Left cardiac atrium (tissue), 4 donors: ENCODE measurements at regions of chr1 and their contacts with region 1.

Region 1: DNA sequence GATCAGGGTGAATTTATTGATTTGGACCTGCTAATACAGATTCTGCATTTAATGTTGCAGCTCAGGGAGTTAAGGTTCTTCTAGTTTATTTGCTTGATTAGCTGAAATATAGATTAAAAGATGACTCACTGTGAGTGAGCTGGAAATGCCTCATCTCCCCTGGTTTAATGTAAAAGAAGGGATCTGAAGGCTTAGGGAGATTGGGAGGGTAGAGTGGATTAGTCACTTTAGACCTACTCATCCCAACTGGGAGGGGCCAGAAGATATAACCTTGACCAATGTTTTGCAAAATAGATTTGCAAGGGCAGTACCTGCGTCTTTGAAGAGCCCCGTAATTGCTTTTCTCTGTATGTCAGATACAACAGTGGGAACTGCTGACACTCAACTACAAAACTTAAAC is 922.8 kb upstream of the ADGRL4 start:
- DNase-seq: no peak
- ATAC-seq: no peak

Region 2: DNA sequence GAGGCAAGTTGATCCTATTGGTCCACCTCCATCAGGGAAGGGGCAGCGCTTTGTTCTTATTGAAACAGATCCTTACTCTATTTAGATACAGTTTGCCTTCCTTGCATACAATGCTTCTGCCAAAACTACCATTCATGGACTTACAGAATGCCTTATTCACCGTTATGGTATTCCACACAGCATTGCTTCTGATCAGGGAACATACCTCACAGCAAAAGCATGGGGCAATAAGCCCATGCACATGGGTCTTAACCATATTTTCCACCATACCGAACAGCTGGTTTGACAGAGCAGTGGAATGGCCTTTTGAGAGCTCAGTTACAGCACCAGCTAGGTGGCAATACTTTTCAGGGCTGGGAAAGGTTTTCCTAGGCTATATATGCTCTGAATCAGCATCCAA is 378.0 kb before region 1 on chr1:
- intact Hi-C with region 1: no loop called
- DNase-seq: no peak
- ATAC-seq: no peak

Region 3: DNA sequence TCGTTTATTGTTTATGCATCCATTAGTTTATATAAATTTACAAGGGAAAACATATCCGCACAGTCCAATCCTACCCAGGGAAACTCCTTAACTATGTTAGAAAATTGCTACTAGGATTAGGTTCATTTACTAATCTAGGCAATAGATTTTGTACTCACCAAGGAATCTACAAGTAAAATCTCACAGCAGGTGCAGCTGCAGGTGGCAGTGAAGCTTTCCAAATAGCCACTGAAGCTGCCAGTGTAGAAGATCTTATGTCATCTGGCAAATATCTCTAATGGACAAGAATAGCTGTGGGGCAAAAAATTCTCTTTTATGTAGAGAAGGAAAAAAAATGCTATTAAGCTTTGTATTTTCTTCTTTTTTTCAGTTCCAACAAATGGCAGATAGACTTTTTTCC is 40.5 kb after region 1 on chr1:
- intact Hi-C with region 1: loop called in 1 of 2 experiments (anchors 10 kb)
- DNase-seq: no peak
- ATAC-seq: no peak